PC-9 (cell line): ENCODE measurements at regions of chrX and their contacts with region 1.

Region 1: DNA sequence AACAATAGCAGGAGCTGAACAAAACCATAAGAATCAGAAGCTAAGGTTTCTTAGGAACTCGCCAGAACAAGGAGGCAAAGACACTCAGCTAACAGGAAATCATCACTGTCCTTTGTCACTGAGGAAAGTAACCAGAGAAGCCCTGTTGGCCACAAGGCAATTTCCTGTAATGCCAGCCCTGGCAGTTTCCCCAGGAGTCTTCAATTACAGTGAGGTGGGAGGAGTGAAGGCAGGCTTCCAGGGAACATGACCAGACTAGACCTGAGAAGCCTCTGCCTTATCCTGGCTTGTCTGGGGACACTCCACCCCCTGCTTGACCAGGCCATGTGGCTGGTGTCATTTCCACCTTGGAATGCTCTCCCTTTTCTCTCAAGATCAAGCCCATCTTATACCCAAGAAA is 125.3 kb downstream of the COL4A6 start:
- DNase-seq: peak; percentile 68 to 84
- H3K4me3 ChIP-seq: no peak overlapping the region
- H3K27ac ChIP-seq: 0 out of 2 replicates have a peak overlapping the region, but pooled peaks have one; percentile 18
- H3K4me1 ChIP-seq: peaks cover 22% of the 10 kb centered on the region; the same call in 1 of the 2 replicates
- H3K27me3 ChIP-seq: no peaks in the 10 kb centered on the region
- CTCF ChIP-seq: no peak

Region 2: GRCh38 chrX:108439434-108439883 is 126.5 kb after region 1 on chrX and contains the start of gene COL4A5:
- CTCF ChIA-PET with region 1: no interaction called
- POLR2A ChIA-PET with region 1: no interaction called
- intact Hi-C with region 1: loop called (anchors 2 kb)
- DNase-seq: peak; percentile 72 to 79
- H3K4me3 ChIP-seq: peak within 1 kb of the TSS; percentile 85
- H3K27ac ChIP-seq: no peak within 1 kb of the TSS
- H3K4me1 ChIP-seq: peaks cover 26% of the 10 kb centered on the region
- H3K27me3 ChIP-seq: no peaks in the 10 kb centered on the region
- CTCF ChIP-seq: no peak
- total RNA-seq, gene COL4A5: 82.3 and 102 TPM in 2 replicates